G401 (cell line): ENCODE measurements at regions of chr7 and their contacts with region 1.

Region 1: DNA sequence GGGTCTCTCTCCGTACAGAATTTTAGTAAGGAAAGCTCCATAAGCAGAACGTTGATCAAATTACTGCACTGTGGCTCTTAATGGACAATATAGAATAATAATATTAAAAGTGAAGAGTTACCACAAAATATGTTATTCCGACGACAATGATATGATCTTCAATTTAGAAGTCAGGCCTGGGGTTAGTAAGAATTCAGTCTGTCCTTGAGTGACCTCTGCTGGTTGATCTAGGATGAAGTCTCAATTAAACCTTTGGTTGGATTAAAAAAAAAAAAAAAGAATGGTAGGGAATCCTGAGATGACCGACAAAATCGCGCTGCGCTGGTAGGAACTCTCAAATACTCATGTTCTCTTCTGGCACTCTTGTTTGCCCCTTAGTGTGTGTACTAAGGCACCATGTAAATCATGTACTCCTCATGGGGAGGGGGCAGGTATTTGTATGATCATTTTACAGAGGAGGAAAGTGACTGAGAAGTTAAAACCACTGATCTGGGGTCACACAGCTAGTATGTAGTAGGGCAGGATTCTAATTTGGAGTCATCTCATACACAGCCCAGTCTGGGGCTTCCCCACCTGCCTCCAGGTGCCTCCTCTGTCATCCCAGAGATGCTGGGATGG is 161.3 kb upstream of the NPVF start:
- DNase-seq: peak; percentile 89

Region 2: GRCh38 chr7:25288556-25289307 is 100.9 kb before region 1 on chr7:
- in situ Hi-C with region 1: no loop called
- DNase-seq: peak; percentile 99

Region 3: DNA sequence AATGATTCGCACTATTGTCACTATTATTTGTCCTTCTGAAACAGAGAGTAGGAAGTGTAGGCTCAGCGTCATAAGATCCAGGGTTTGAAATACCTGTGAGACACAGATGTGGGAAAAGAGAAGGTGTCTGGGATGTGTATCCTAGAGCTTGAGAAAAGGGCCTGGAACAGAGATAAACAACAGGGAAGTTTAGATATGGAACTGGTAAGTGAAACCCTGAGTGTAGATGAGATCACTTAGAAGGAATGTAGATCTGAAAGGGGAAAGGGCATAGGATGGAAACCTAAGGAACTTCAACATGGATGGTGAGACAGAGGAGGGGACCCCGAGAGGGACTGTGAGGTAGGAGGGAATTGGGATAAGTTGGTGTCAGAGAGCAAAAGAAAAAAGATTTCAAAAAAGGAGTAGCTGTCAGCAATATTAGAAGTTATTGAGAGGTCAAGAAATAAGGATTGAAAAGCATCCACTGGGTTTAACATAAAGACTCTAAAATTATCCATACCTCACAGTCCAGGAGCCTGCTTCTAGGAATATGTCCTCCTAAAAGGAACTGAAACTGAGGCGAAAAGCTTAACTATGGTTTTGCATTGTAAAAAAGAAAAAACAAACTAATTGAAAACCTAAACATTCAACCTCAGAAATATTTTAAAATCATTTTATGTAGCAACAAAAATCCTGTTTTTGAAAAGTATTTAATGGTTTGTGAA is 42.1 kb before region 1 on chr7:
- in situ Hi-C with region 1: no loop called
- DNase-seq: peak; percentile 19

Region 4: DNA sequence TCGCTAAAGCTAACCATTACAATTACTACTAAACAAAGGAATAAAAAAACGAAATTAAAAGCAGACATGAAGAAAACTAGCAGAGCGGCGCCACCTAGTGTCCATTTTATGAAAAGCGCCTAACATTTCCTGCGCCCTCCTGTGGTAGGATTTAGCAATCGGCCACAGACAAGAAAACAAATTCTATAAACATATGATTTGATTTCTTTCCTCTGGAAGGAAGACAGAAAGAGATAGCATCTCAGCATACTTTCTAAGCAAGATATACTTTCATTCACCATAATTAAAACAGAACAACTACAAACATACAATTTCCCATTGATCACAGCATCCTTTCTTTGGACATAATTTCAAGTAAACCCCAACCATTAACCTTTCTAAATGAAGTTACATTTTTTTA is 176.4 kb after region 1 on chr7:
- in situ Hi-C with region 1: loop called (anchors 25 kb)
- DNase-seq: peak; percentile 82